Naive thymus-derived CD8-positive, alpha-beta T cell (primary cell): ENCODE measurements at regions of chr19 and their contacts with region 1.

Region 1: DNA sequence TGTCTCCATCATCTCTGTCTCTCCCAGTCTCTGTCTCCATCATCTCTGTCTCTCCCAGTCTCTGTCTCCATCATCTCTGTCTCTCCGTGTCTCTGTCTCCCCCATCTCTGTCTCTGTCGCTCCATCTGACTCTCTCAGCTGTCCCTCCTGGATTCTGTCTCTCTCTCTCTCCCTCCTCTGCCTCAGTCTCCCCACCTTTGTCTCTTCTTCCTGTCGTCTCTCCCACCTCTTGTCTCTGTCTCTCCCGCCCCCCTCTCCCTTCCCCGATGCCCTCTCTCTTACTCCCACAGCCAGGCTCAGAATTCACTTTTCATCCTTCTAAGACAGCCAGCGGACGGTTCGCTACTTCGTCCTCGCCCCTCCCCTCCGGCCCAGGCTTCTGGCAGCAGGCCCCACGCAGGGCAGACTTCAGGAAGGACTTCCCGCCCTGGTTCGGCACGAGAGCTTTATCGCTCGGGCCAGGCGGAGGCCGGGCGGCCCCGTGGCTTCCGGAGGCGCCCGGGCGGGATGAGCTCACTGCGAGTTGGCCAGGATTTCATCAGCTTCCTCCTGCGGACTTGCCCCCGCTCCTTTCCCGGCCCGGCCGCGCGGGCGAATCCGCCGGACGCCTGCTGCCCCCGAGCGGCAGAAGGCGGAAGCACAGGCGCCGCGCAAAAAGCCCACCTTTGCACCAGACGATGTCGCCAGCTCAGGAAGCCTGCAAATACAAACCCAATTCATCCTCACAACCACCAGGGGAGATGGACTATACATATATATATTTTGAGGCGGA is 12.4 kb upstream of the CCDC9 start:
- DNase-seq: peak; percentile 81 to 92 (median 89)
- ATAC-seq: peak; percentile 43 to 53
- H3K4me3 Mint-ChIP-seq: peak overlapping the region in 9 of 10 donors; percentile 68 to 93 (median 81)
- H3K27ac Mint-ChIP-seq: peak overlapping the region in 7 of 10 donors; percentile 22 to 97 (median 81)
- H3K4me1 Mint-ChIP-seq: peaks cover 9 to 41% (median 29%) of the 10 kb centered on the region in 4 donors
- H3K27me3 Mint-ChIP-seq: peaks cover 0 to 7% (median 0%) of the 10 kb centered on the region in 5 donors

Region 2: DNA sequence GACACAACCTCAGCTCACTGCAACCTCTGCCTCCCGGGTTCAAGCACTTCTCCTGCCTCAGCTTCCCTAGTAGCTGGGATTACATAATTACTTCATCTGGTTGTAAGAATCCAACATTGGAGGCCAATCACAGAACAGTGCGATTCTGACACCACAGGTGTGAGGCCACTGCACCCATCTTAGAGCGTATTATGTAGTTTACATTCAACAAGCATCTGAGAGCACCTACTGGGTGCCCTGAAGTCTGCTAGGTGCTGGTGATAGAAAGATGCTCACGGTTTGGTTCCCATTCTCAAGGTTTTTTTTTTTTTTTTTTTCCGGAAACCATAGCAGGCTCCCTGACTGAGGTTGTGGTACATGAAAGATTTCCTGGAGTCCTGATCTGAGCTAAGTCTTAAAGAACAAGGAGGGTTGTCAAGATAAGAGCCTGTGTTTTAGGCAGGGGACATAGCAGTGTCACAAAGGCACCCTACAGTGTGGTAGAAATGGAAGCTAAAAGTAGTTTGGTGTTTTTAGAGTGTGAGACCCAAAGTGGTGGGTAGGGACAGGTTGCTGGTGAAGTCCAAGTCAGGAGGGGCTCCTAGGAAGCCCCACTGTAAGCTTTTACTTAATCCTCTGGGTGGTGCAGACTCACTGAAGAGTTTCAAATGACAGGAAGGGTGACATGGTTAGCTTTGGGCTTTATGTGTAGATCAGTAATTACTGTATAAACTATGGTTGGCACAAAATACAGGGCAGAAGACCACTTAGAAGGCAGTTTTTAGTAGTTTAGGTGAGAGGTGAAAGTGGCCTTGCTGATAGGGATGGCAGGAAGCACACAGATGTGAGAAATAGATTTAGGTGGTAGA is 98.1 kb before region 1 on chr19:
- POLR2A ChIA-PET with region 1: interaction called, 39 read pairs
- DNase-seq: peak in 8 of 10 donors; percentile 29 to 80 (median 49)
- ATAC-seq: peak; percentile 95 to 98
- H3K4me3 Mint-ChIP-seq: peak overlapping the region; percentile 55 to 83 (median 74)
- H3K27ac Mint-ChIP-seq: peak overlapping the region; percentile 82 to 94 (median 91)
- H3K4me1 Mint-ChIP-seq: peaks cover 28 to 82% (median 56%) of the 10 kb centered on the region in 4 donors
- H3K27me3 Mint-ChIP-seq: no peaks in the 10 kb centered on the region

Region 3: GRCh38 chr19:47157431-47158321 is 86.3 kb before region 1 on chr19:
- POLR2A ChIA-PET with region 1: interaction called, 61 read pairs
- DNase-seq: peak in 6 of 10 donors; percentile 4 to 52 (median 38)
- ATAC-seq: peak; percentile 21 to 23
- H3K4me3 Mint-ChIP-seq: peak overlapping the region; percentile 61 to 91 (median 82)
- H3K27ac Mint-ChIP-seq: peak overlapping the region; percentile 83 to 98 (median 93)
- H3K4me1 Mint-ChIP-seq: peaks cover 28 to 77% (median 65%) of the 10 kb centered on the region in 4 donors
- H3K27me3 Mint-ChIP-seq: no peaks in the 10 kb centered on the region

Region 4: GRCh38 chr19:47210689-47211316 is 33.2 kb before region 1 on chr19:
- POLR2A ChIA-PET with region 1: interaction called, 66 read pairs
- DNase-seq: peak; percentile 58 to 87 (median 78)
- ATAC-seq: peak; percentile 74 to 89
- H3K4me3 Mint-ChIP-seq: peak overlapping the region in 6 of 10 donors; percentile 5 to 46 (median 23)
- H3K27ac Mint-ChIP-seq: peak overlapping the region; percentile 7 to 86 (median 80)
- H3K4me1 Mint-ChIP-seq: peaks cover 8 to 29% (median 17%) of the 10 kb centered on the region in 4 donors
- H3K27me3 Mint-ChIP-seq: no peaks in the 10 kb centered on the region

Region 5: DNA sequence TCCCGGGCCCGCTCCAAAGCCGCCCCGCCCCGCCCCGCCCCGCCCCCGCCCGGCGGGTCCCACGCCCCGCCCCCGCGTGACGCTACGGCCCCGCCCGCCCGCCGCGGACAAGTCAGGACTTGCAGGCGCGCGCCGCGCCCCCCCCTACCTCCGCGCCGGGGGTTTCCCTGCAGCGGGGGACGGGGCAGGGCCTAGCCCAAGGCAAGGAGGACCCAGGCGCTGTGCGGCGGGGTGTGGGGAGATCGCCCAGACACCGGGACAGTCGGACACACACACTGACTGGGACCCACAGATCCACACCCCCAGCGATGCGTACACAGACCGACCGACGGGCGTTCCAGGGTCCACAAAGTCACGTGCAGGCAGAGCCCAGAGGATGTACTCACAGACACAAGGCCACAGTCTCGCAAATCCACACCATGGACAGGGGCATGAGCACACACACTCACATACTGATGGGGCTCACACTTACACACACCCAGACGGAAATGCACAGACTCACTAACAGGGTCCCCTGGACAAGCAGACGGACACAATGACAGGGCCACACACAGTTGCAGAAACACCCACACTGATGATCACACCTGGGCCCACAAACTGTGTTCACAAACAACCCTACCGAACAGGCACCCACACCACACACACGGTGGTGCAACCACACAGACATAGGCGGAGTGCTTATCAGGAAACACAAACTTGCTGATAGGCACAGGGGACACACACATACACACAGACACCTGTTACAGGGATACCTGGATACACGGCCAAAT is 12.6 kb before region 1 on chr19:
- POLR2A ChIA-PET with region 1: interaction called, 116 read pairs
- DNase-seq: peak; percentile 82 to 95 (median 86)
- ATAC-seq: peak; percentile 50 to 63
- H3K4me3 Mint-ChIP-seq: peak overlapping the region; percentile 24 to 87 (median 82)
- H3K27ac Mint-ChIP-seq: peak overlapping the region; percentile 66 to 95 (median 92)
- H3K4me1 Mint-ChIP-seq: peaks cover 17 to 31% (median 23%) of the 10 kb centered on the region in 4 donors
- H3K27me3 Mint-ChIP-seq: no peaks in the 10 kb centered on the region

Region 6: GRCh38 chr19:47273313-47273977 is 29.5 kb after region 1 on chr19:
- POLR2A ChIA-PET with region 1: interaction called, 12 read pairs
- DNase-seq: peak; percentile 80 to 94 (median 87)
- ATAC-seq: peak; percentile 69
- H3K4me3 Mint-ChIP-seq: peak overlapping the region; percentile 86 to 99 (median 97)
- H3K27ac Mint-ChIP-seq: peak overlapping the region; percentile 88 to 99 (median 98)
- H3K4me1 Mint-ChIP-seq: peaks cover 21 to 39% (median 27%) of the 10 kb centered on the region in 4 donors
- H3K27me3 Mint-ChIP-seq: no peaks in the 10 kb centered on the region